ENCODE measurements at regions of chr14 and their contacts with region 1.

Region 1: DNA sequence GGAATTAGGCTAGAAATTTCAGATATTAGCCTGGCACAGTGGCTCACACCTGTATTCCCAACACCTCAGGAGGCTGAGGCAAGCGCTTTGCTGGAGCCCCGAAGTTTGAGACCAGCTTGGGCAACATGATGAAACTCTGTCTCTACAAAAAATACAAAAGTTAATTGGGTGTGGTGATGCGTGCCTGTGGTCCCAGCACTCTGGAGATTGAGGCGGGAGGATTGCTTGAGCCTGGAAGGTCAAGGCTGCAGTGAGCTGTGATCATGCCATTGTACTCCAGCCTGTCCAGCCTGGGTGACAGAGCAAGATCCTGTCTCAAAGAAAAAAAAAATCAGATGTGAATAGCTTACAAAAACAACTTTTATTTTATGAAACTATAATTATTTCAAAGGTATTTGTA is 15.1 kb downstream of the FRMD6 start:
- DNase-seq: no peak
- H3K4me3 Mint-ChIP-seq: no peak overlapping the region
- H3K27ac Mint-ChIP-seq: no peak overlapping the region
- H3K4me1 Mint-ChIP-seq: peaks cover 22% of the 10 kb centered on the region
- H3K27me3 Mint-ChIP-seq: no peaks in the 10 kb centered on the region
- CTCF ChIP-seq: no peak

Region 2: GRCh38 chr14:51566831-51567582 is 99.8 kb before region 1 on chr14:
- CTCF ChIA-PET with region 1: no interaction called
- POLR2A ChIA-PET with region 1: no interaction called
- intact Hi-C with region 1: no loop called
- DNase-seq: no peak
- H3K4me3 Mint-ChIP-seq: no peak overlapping the region
- H3K27ac Mint-ChIP-seq: no peak overlapping the region
- H3K4me1 Mint-ChIP-seq: peaks cover 12% of the 10 kb centered on the region
- H3K27me3 Mint-ChIP-seq: no peaks in the 10 kb centered on the region
- CTCF ChIP-seq: no peak

Region 3: GRCh38 chr14:51677266-51677665 is 10.4 kb after region 1 on chr14:
- CTCF ChIA-PET with region 1: interaction called, 3 read pairs
- POLR2A ChIA-PET with region 1: interaction called, 21 read pairs
- intact Hi-C with region 1: no loop called
- DNase-seq: no peak
- H3K4me3 Mint-ChIP-seq: no peak overlapping the region
- H3K27ac Mint-ChIP-seq: peak overlapping the region; percentile 66
- H3K4me1 Mint-ChIP-seq: peaks cover 61% of the 10 kb centered on the region
- H3K27me3 Mint-ChIP-seq: no peaks in the 10 kb centered on the region
- CTCF ChIP-seq: no peak